ENCODE measurements at regions of chr20 and their contacts with region 1.

Region 1: DNA sequence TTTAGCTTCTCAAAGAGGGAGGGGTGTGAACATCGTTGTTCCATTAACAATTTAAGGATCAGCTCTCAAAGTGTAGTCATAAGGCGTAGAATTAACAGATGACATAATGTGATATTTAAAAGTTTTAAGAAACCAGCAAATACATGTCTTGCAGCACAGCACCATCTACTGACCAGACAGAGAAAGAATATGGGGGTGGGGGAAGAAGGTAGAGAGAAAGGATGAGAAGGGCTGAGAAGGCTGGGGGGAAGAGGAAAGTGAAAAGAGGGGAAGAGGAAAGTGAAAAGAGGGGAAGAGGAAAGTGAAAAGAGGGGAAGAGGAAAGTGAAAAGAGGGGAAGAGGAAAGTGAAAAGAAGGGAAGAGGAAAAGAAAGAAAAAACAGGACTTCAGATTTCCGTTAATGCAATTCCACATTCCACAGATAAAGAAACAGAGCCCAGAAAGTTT is 80.9 kb downstream of the HAO1 start:
- DNase-seq: no peak
- H3K4me3 ChIP-seq: no peak overlapping the region
- H3K27ac ChIP-seq: no peak overlapping the region
- H3K4me1 ChIP-seq: no peaks in the 10 kb centered on the region
- H3K27me3 ChIP-seq: no peaks in the 10 kb centered on the region
- CTCF ChIP-seq: peak in 2 of 4 experiments; percentile 39 to 46
- POLR2A ChIP-seq: no peak

Region 2: DNA sequence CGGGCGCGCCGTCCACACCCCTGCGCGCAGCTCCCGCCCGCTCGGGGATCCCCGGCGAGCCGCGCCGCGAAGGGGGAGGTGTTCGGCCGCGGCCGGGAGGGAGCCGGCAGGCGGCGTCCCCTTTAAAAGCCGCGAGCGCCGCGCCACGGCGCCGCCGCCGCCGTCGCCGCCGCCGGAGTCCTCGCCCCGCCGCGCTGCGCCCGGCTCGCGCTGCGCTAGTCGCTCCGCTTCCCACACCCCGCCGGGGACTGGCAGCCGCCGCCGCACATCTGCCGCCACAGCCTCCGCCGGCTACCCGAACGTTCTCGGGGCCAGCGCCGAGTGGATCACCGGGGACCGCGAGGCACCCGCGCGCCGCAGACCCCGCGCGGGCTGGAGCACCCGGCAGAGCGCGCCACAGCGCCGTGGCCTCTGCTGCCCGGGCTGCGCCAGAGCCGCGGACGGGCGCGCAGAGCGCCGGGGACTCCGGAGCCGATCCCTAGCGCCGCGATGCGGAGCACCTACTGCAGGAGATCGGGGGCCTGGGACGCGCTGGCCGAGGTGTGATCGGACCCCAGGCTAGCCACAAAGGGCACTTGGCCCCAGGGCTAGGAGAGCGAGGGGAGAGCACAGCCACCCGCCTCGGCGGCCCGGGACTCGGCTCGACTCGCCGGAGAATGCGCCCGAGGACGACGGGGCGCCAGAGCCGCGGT is 1091.7 kb before region 1 on chr20 and contains the start of gene BMP2:
- intact Hi-C with region 1: loop called (anchors 10 kb)
- DNase-seq: peak; percentile 16
- H3K4me3 ChIP-seq: peak within 1 kb of the TSS; percentile 40 to 50
- H3K27ac ChIP-seq: peak within 1 kb of the TSS; percentile 38 to 55
- H3K4me1 ChIP-seq: no peaks in the 10 kb centered on the region
- H3K27me3 ChIP-seq: no peaks in the 10 kb centered on the region
- CTCF ChIP-seq: peak in 1 of 4 experiments; percentile 12
- POLR2A ChIP-seq: no peak
- total RNA-seq, gene BMP2: 4.3 to 5.6 TPM

Region 3: GRCh38 chr20:7841971-7842310 is 17.4 kb before region 1 on chr20:
- intact Hi-C with region 1: loop called (anchors 1 kb)
- DNase-seq: no peak
- H3K4me3 ChIP-seq: no peak overlapping the region
- H3K27ac ChIP-seq: no peak overlapping the region
- H3K4me1 ChIP-seq: no peaks in the 10 kb centered on the region
- H3K27me3 ChIP-seq: no peaks in the 10 kb centered on the region
- CTCF ChIP-seq: no peak
- POLR2A ChIP-seq: no peak

Measured in prostate gland (tissue), 2 donors.